Psoas muscle (tissue), 8 donors: ENCODE measurements at regions of chr20 and their contacts with region 1.

Region 1: GRCh38 chr20:34431168-34431567 is 68.1 kb downstream of the ITCH start:
- DNase-seq: no peak
- ATAC-seq: no peak
- H3K4me3 ChIP-seq: no peak overlapping the region
- H3K27ac ChIP-seq: no peak overlapping the region
- H3K4me1 ChIP-seq: no peaks in the 10 kb centered on the region
- H3K27me3 ChIP-seq: no peaks in the 10 kb centered on the region
- CTCF ChIP-seq: no peak

Region 2: GRCh38 chr20:34385464-34385863 is 45.7 kb before region 1 on chr20:
- intact Hi-C with region 1: no loop called
- DNase-seq: no peak
- ATAC-seq: no peak
- H3K4me3 ChIP-seq: no peak overlapping the region
- H3K27ac ChIP-seq: peak overlapping the region; percentile 66
- H3K4me1 ChIP-seq: peaks cover 36% of the 10 kb centered on the region
- H3K27me3 ChIP-seq: no peaks in the 10 kb centered on the region
- CTCF ChIP-seq: no peak

Region 3: GRCh38 chr20:34452281-34452982 is 21.3 kb after region 1 on chr20:
- intact Hi-C with region 1: loop called in 1 of 2 experiments (anchors 1 kb)
- DNase-seq: no peak
- ATAC-seq: no peak
- H3K4me3 ChIP-seq: no peak overlapping the region
- H3K27ac ChIP-seq: no peak overlapping the region
- H3K4me1 ChIP-seq: no peaks in the 10 kb centered on the region
- H3K27me3 ChIP-seq: no peaks in the 10 kb centered on the region
- CTCF ChIP-seq: no peak